ENCODE measurements at regions of chrX and their contacts with region 1.

Region 1: DNA sequence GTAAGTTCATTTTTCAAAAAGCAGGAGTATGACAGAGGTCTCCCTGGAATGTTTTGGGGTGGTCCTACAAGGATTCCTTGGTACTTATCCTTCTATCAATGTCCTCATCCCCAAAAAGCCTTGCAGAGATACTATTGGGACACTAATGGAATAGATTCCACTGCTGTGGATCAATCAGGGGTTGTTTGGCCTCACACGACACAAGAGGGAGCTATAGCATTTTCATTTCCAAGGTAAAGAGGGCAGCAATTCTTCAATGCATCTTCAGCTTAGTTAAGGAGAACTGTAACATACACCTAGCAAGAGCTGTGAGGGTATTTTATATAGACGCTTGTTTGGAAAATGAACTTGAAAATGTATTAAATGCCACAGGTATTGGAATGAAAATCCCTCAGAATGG is 50.9 kb downstream of the USP26 start:
- DNase-seq: peak; percentile 9
- H3K4me3 ChIP-seq: no peak overlapping the region
- H3K27ac ChIP-seq: no peak overlapping the region
- H3K4me1 ChIP-seq: no peaks in the 10 kb centered on the region
- H3K27me3 ChIP-seq: peaks cover 1% of the 10 kb centered on the region
- CTCF ChIP-seq: peak; percentile 32 to 59

Region 2: GRCh38 chrX:132740316-132741123 is 305.5 kb before region 1 on chrX:
- CTCF ChIA-PET with region 1: no interaction called
- dilution Hi-C with region 1: no loop called
- in situ Hi-C with region 1: no loop called
- intact Hi-C with region 1: loop called (anchors 2 kb)
- DNase-seq: no peak
- H3K4me3 ChIP-seq: no peak overlapping the region
- H3K27ac ChIP-seq: no peak overlapping the region
- H3K4me1 ChIP-seq: peaks cover 3% of the 10 kb centered on the region
- H3K27me3 ChIP-seq: no peaks in the 10 kb centered on the region
- CTCF ChIP-seq: peak; percentile 73 to 75

Region 3: DNA sequence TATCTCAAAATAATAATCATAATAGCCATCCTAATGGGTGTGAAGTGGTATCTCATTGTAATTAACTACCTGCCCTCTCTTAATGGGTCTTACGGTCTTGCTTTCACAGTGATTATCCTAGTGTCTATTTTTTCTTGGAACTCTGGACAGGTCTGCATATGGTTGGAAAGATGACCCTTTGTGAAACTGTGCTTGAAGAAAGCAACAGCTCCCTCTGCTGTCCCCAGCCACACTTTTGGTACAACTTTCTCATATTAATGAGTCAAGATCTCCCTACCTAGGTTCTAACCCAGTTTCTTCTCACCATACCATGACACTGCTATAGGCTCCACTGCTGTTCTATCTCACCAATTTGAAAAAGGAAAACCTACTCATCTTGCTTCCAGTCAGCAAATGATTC is 169.8 kb after region 1 on chrX:
- CTCF ChIA-PET with region 1: no interaction called
- dilution Hi-C with region 1: no loop called
- in situ Hi-C with region 1: no loop called
- intact Hi-C with region 1: loop called (anchors 1 kb)
- DNase-seq: peak; percentile 19
- H3K4me3 ChIP-seq: no peak overlapping the region
- H3K27ac ChIP-seq: no peak overlapping the region
- H3K4me1 ChIP-seq: no peaks in the 10 kb centered on the region
- H3K27me3 ChIP-seq: no peaks in the 10 kb centered on the region
- CTCF ChIP-seq: peak; percentile 37 to 63